OCI-LY7 (cell line): ENCODE measurements at regions of chr2 and their contacts with region 1.

Region 1: DNA sequence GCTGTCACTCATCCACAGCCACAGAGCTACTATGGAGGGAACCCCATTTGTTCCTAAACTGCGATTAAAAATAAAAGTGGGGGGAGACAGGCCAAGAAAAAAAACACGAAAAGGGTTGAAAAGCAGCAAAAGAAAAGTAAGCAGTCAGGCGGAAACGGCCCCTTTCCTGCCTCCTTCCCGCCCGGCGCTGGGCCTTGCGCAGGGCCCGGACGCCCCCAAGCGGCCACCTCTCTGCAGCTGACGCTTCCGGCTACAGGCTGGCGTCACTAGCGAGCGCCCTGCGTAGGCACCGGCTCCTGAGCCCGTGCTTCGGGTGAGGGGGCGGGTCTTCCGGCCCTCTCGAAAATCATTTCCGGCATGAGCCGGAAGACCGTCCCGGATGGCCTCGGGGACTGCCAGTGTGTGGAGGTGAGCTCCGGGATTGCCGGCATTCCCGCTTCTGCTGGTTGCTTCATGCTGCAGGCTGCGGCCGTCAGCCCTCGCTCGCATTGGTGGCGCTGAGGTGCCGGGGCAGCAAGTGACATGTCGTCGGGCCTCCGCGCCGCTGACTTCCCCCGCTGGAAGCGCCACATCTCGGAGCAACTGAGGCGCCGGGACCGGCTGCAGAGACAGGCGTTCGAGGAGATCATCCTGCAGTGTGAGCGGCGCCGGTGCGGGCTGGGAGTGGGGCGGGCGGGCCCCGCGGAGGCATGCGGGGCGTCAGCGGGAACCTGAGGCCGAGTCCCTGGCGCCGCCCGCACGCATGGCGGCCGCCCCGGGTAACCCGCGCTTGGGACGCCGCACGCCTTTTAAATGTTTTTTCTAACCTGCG is at the start of gene ATG16L1:
- DNase-seq: peak; percentile 98
- H3K4me3 ChIP-seq: peak within 1 kb of the TSS; percentile 96
- H3K27ac ChIP-seq: peak within 1 kb of the TSS; percentile 71
- H3K4me1 ChIP-seq: peaks cover 43% of the 10 kb centered on the region
- CTCF ChIP-seq: peak; percentile 94
- total RNA-seq, gene ATG16L1: 42.5 and 44.9 TPM in 2 replicates

Region 2: DNA sequence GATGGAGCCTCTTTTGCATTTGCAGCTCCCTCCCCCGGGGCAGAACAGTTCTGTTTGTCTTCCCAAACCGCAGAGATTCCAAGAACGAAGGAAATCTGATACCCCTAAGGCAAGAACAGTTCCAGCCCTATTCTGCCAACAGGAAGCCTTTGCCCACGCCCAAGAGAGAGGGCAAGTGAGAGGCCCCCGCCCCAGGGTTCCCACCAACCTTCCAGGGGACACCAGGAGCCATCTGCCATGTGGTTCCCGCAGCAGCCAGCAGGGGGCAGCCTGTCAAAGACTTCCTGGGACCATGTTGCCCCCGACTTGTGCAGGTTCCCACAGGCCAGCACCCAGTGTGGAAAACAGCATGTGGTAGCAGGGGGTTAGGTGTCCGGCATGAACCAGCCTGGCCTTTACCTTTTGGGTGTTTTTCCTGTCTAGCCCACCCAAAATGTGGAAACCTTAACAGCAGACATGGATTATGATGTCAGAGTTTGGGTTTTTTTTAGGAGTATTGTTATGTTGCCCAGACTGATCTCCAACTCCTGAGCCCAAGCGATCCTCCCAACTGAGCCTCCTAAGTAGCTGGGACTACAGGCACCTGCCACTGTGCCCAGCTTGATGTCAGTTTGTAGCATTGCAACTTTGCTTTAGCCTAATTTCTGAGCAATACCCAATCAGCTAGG is 639.8 kb before region 1 on chr2:
- CTCF ChIA-PET with region 1: no interaction called
- POLR2A ChIA-PET with region 1: no interaction called
- intact Hi-C with region 1: loop called (anchors 1 kb)
- DNase-seq: peak; percentile 55
- H3K4me3 ChIP-seq: no peak overlapping the region
- H3K27ac ChIP-seq: no peak overlapping the region
- H3K4me1 ChIP-seq: no peaks in the 10 kb centered on the region
- CTCF ChIP-seq: peak; percentile 91

Region 3: DNA sequence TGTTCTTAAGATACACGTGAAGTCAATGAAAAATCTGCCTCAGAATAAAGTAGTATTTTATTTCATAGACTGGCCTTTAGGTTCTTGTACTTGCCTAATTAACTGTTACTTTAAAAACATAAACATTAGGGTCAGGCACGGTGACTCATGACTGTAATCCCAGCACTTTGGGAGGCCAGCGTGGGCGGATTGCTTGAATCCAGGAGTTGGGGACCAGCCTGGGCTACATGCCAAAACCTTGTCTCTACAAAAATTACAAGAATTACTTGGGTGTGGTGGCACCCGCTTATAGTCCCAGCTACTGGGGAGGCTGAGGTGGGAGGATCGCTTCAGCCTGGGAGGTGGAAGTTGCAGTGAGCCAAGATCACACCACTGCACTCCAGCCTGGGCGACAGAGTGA is 397.4 kb before region 1 on chr2:
- CTCF ChIA-PET with region 1: no interaction called
- POLR2A ChIA-PET with region 1: interaction called, 3 read pairs
- intact Hi-C with region 1: loop called (anchors 1 kb)
- DNase-seq: no peak
- H3K4me3 ChIP-seq: no peak overlapping the region
- H3K27ac ChIP-seq: no peak overlapping the region
- H3K4me1 ChIP-seq: no peaks in the 10 kb centered on the region
- CTCF ChIP-seq: no peak

Region 4: GRCh38 chr2:233061591-233062450 is 189.7 kb before region 1 on chr2:
- CTCF ChIA-PET with region 1: interaction called, 4 read pairs
- POLR2A ChIA-PET with region 1: interaction called, 8 read pairs
- intact Hi-C with region 1: loop called (anchors 1 kb)
- DNase-seq: peak; percentile 73
- H3K4me3 ChIP-seq: peak overlapping the region; percentile 81
- H3K27ac ChIP-seq: peak overlapping the region; percentile 87
- H3K4me1 ChIP-seq: peaks cover 38% of the 10 kb centered on the region
- CTCF ChIP-seq: peak; percentile 67

Region 5: GRCh38 chr2:233100192-233100998 is 151.1 kb before region 1 on chr2:
- CTCF ChIA-PET with region 1: interaction called, 5 read pairs
- POLR2A ChIA-PET with region 1: interaction called, 10 read pairs
- intact Hi-C with region 1: loop called (anchors 1 kb)
- DNase-seq: peak; percentile 95
- H3K4me3 ChIP-seq: peak overlapping the region; percentile 60
- H3K27ac ChIP-seq: peak overlapping the region; percentile 98
- H3K4me1 ChIP-seq: peaks cover 69% of the 10 kb centered on the region
- CTCF ChIP-seq: no peak

Region 6: GRCh38 chr2:233223059-233223894 is 28.2 kb before region 1 on chr2:
- CTCF ChIA-PET with region 1: interaction called, 3 read pairs
- POLR2A ChIA-PET with region 1: interaction called, 16 read pairs
- intact Hi-C with region 1: loop called (anchors 2 kb)
- DNase-seq: peak; percentile 86
- H3K4me3 ChIP-seq: no peak overlapping the region
- H3K27ac ChIP-seq: peak overlapping the region; percentile 80
- H3K4me1 ChIP-seq: peaks cover 70% of the 10 kb centered on the region
- CTCF ChIP-seq: no peak